ENCODE measurements at regions of chr20 and their contacts with region 1.

Region 1: DNA sequence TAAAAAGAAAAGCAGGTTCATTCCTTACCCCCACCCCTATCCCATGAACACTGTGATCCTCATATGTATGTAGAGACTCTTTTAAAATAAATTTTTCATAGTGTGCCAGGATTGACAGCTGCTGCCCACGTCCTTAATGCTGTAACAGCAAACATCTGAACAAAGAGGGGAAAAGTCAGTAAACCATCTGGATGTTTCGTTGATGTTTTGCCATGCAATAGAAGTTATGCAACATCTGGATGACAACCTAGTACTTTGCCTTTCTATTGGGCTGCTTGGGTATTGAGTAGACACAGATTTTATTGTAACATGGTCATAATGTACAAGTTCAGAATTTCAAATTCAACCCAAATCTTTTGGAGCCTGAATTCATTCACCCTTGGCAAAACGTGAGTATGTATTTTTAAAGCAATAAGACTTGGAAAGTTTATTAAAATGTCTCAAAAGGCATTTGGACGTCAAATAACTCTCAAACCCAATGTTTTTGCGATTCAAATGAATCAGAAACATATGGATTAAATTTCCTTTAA is 500.3 kb downstream of the DHX35 start:
- DNase-seq: no peak
- H3K4me3 ChIP-seq: no peak overlapping the region
- H3K27ac ChIP-seq: peak overlapping the region in 1 of 2 donors; percentile 7
- H3K4me1 ChIP-seq: no peaks in the 10 kb centered on the region
- H3K27me3 ChIP-seq: no peaks in the 10 kb centered on the region
- CTCF ChIP-seq: no peak
- POLR2A ChIP-seq: no peak

Region 2: DNA sequence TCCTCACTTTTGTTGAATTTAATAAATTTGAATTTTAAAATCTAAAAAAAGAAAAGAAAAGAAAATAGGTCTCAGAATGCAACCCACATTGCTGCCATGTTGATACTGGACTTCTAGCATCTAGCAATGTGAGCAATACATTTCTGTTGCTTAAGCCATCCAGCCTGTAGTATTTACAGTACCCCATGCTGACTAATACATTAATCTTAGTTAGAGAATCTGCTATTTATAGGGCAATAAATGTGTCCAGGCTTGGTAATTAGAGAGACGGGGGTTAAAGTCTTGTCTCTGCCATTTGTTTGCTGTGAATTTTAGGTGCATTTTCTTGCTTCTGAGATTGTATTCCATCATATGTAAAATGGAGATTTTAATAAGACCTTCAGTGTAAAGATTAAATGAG is 29.0 kb before region 1 on chr20:
- intact Hi-C with region 1: no loop called
- DNase-seq: no peak
- H3K4me3 ChIP-seq: no peak overlapping the region
- H3K27ac ChIP-seq: no peak overlapping the region
- H3K4me1 ChIP-seq: no peaks in the 10 kb centered on the region
- H3K27me3 ChIP-seq: no peaks in the 10 kb centered on the region
- CTCF ChIP-seq: no peak
- POLR2A ChIP-seq: no peak

Region 3: GRCh38 chr20:39503902-39504709 is 41.6 kb after region 1 on chr20:
- intact Hi-C with region 1: loop called (anchors 2 kb)
- DNase-seq: no peak
- H3K4me3 ChIP-seq: no peak overlapping the region
- H3K27ac ChIP-seq: no peak overlapping the region
- H3K4me1 ChIP-seq: no peaks in the 10 kb centered on the region
- H3K27me3 ChIP-seq: no peaks in the 10 kb centered on the region
- CTCF ChIP-seq: no peak
- POLR2A ChIP-seq: no peak

Region 4: DNA sequence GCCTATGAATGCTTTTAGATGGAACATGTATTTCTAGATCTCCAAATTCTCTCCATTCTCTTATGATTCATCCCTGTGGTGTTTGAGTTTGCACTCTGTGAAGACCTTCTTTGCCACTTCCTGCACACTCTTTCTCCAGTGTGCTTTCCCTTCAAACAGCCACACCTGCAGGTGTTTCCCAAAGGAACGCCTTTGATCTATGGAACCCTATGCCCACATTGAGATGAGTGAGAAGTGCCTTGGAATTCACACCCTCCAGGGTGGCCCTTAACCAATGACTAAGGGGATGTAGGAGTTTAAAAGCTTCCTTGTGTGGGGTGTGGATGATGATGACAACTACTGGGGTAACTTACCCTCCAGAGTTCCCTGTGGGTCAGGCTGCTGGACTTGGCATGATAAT is 69.7 kb after region 1 on chr20:
- intact Hi-C with region 1: no loop called
- DNase-seq: no peak
- H3K4me3 ChIP-seq: no peak overlapping the region
- H3K27ac ChIP-seq: no peak overlapping the region
- H3K4me1 ChIP-seq: no peaks in the 10 kb centered on the region
- H3K27me3 ChIP-seq: peaks cover 0 to 3% of the 10 kb centered on the region in 2 donors
- CTCF ChIP-seq: no peak
- POLR2A ChIP-seq: no peak

Measured in breast epithelium (tissue), 4 donors.